HEK293 (cell line): ENCODE measurements at regions of chr2 and their contacts with region 1.

Region 1: GRCh38 chr2:205868773-205869333 is 186.6 kb downstream of the NRP2 start:
- H3K4me3 ChIP-seq: no peak overlapping the region
- H3K27ac ChIP-seq: no peak overlapping the region
- H3K4me1 ChIP-seq: peaks cover 7% of the 10 kb centered on the region
- CTCF ChIP-seq: no peak

Region 2: GRCh38 chr2:205845446-205845845 is 23.4 kb before region 1 on chr2:
- CTCF ChIA-PET with region 1: interaction called, 12 read pairs
- POLR2A ChIA-PET with region 1: no interaction called
- H3K4me3 ChIP-seq: no peak overlapping the region
- H3K27ac ChIP-seq: no peak overlapping the region
- H3K4me1 ChIP-seq: no peaks in the 10 kb centered on the region
- CTCF ChIP-seq: no peak

Region 3: DNA sequence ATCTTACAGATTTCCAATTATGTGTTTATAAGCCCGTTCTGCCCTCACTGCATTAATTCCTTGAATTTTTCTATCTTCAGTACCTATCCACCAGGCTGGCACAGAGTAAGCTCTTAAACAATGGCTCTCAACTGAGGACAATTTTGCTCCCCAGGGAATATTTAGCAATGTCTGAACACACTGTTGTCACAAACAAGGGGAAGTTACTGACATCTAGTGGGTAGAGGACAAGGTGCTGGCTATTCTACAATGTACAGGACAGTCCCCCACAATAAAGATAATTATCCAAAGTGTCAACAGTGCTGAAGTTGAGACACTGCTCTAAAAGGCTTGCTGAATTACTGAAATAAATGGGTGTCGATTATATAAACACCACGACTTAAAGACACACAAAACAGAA is 285.3 kb after region 1 on chr2:
- CTCF ChIA-PET with region 1: no interaction called
- POLR2A ChIA-PET with region 1: no interaction called
- H3K4me3 ChIP-seq: no peak overlapping the region
- H3K27ac ChIP-seq: no peak overlapping the region
- H3K4me1 ChIP-seq: no peaks in the 10 kb centered on the region
- CTCF ChIP-seq: peak; percentile 50